ENCODE measurements at regions of chr9 and their contacts with region 1.

Region 1: DNA sequence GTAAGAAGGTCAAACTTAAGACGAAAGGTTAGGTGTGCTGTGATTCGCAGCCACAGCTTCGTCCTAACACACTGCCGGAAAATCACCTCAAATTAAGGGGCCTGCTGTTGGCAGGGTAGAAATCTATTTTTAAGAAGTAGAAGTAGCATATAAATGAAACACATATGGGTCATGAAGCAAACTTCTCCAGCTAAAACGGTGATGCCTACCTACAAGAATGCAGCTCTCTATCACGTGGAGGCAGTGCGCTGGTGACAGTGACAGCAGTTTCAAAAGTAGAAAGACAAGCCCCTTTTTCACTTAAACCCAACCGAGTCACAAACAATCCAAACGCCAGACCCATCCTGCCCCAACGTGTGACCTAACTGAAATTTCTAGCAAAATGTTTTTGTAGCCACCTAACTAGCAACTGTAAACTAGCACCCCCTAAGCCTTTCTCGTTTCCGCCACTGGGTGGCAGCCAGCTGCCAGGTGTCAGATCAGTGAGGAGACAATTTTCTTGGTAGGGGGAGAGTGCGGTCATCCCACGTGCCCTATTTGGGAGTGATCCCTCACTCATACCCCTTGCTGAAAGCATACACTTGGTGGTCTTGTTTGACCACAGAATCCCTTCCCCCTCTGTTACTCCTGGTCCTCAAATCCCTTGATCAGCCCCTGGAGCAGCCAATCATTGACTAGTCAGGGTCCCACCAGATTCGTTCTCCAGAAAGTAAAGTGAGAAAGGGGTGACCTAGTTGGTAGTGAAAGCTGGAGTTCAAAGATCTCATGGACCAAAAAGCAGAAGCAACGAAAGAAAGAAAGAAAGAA is 71.8 kb upstream of the MAMDC2 start:
- DNase-seq: peak; percentile 88
- H3K4me3 ChIP-seq: peak overlapping the region in 1 of 4 donors; percentile 11
- H3K27ac ChIP-seq: peak overlapping the region in 1 of 4 donors; percentile 46
- H3K4me1 ChIP-seq: peaks cover 0 to 13% (median 9%) of the 10 kb centered on the region in 4 donors
- H3K27me3 ChIP-seq: no peaks in the 10 kb centered on the region
- CTCF ChIP-seq: peak; percentile 73 to 92 (median 88)
- EP300 ChIP-seq: no peak
- POLR2A ChIP-seq: no peak

Region 2: DNA sequence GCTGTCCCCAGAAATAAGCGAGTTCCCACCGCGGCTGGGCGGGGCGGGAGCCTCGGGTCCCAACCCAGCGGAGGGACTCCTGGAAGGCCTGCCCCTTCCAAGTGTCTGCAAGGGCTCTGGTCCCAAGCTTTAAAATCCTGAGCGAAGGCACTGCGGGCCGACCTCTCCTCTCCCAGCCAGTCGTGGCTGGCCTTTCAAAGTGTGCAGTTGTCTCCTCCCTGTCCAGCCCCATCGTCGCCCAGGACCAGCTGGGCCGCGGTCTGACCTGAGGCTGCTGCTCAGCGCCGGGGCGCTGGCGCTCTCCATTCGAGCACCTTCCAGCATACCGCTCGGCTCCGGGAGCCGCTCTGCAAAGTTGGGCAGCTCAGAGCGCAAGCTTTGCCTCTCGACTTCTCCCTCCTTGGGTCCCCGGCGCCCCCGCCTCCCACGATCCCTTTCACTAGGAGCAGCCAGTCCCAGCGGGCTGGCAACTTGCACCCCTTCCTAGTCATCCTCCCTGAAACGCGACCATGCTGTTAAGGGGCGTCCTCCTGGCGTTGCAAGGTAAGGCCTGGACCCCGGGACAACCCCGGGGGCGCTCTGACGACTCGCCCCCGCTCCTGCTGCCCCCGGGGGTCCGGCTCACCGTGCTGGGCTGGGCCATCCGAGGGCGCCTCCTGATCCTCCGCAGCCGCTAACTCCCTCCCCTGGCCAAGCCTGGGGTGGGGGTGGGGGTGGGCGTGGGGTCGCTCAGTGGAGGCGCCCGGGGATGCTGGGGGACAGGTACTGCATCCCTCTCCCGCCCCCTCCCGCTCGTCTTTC is 72.0 kb after region 1 on chr9 and contains the start of gene MAMDC2:
- intact Hi-C with region 1: loop called (anchors 2 kb)
- DNase-seq: peak; percentile 91
- H3K4me3 ChIP-seq: peak within 1 kb of the TSS; percentile 61 to 84 (median 76)
- H3K27ac ChIP-seq: peak within 1 kb of the TSS; percentile 87 to 98 (median 93)
- H3K4me1 ChIP-seq: peaks cover 0 to 80% (median 73%) of the 10 kb centered on the region in 4 donors
- H3K27me3 ChIP-seq: no peaks in the 10 kb centered on the region
- CTCF ChIP-seq: no peak
- EP300 ChIP-seq: no peak
- POLR2A ChIP-seq: peak; percentile 65 to 74
- total RNA-seq, gene MAMDC2: 89.9 to 167 (median 137) TPM

Region 3: DNA sequence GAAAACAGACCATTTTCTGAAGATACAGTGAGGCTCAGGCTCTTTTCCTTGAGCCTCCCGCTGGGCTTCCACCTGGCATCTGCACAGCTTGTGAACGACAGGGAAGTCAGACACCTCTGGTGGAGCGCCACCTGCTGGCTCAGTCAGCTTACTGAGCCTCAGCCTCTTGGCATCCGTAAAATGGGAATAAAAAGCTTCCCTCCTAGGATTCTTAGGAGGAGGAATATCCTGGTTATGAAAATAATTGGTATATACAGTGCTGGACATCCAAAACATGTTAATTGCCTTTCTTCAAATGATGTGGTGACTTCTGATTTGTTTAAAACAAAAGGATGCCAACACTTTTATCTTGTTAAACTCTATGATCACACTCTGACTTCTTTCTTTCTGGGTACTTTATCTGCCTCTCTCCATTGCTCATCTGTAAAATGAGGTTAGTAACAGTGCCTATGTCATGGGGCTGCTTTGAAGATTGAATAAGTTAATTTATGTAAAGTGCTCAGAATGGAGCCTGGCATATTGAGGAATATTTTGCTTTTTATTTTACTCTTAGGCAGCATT is 139.3 kb after region 1 on chr9:
- intact Hi-C with region 1: loop called (anchors 1 kb)
- DNase-seq: peak; percentile 94
- H3K4me3 ChIP-seq: no peak overlapping the region
- H3K27ac ChIP-seq: peak overlapping the region; percentile 42 to 72 (median 65)
- H3K4me1 ChIP-seq: peaks cover 0 to 68% (median 52%) of the 10 kb centered on the region in 4 donors
- H3K27me3 ChIP-seq: no peaks in the 10 kb centered on the region
- CTCF ChIP-seq: peak; percentile 50 to 90 (median 86)
- EP300 ChIP-seq: peak in 1 of 4 donors; percentile 20
- POLR2A ChIP-seq: no peak

Region 4: GRCh38 chr9:70229579-70229978 is 257.7 kb after region 1 on chr9:
- intact Hi-C with region 1: loop called (anchors 5 kb)
- DNase-seq: no peak
- H3K4me3 ChIP-seq: no peak overlapping the region
- H3K27ac ChIP-seq: peak overlapping the region in 3 of 4 donors; percentile 6 to 36 (median 32)
- H3K4me1 ChIP-seq: peaks cover 0 to 28% (median 20%) of the 10 kb centered on the region in 4 donors
- H3K27me3 ChIP-seq: no peaks in the 10 kb centered on the region
- CTCF ChIP-seq: no peak
- EP300 ChIP-seq: no peak
- POLR2A ChIP-seq: no peak

Region 5: DNA sequence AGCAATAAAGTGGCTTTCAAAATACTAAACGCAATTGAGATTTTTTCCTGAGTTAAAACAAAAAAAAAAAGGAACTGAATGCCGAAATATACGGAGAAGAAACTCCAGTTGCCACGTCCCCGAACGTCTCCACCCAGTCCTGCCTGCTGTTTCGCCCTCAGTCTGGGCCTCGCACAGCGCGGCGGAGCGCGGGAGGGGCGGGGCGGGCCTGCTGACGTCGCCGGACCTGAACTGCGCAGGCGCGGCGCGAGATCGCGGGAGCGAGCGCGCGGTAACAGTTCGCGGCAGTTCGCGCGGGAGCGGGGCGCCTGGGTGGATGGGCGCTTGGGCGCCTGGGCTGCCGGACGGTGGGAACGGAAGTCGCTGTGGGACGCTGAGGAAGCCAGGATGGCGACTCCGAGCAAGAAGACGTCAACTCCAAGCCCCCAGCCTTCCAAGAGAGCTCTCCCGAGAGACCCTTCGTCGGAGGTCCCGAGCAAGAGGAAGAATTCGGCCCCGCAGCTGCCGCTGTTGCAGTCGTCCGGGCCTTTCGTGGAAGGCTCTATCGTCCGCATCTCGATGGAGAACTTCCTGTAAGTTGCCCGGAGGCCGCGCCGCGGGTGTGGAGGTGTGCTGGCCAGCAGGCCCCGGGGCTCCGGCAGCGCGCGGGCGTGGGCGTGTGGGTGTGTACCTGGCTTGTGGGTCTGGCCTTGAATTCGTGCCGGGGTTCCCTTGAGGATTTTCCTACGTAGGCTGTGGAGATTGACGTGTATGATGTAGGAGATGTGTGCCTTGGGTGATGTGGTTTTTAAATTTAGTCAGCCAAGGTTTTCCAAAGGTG is 287.1 kb after region 1 on chr9 and contains the start of gene SMC5:
- intact Hi-C with region 1: loop called (anchors 10 kb)
- DNase-seq: peak; percentile 94
- H3K4me3 ChIP-seq: peak within 1 kb of the TSS; percentile 71 to 77 (median 74)
- H3K27ac ChIP-seq: peak within 1 kb of the TSS; percentile 90 to 95 (median 91)
- H3K4me1 ChIP-seq: peaks cover 0 to 74% (median 57%) of the 10 kb centered on the region in 4 donors
- H3K27me3 ChIP-seq: no peaks in the 10 kb centered on the region
- CTCF ChIP-seq: no peak
- EP300 ChIP-seq: no peak
- POLR2A ChIP-seq: peak; percentile 91 to 95
- total RNA-seq, gene SMC5: 20.1 to 31.6 (median 23.4) TPM